ENCODE measurements at regions of chr4 and their contacts with region 1.

Region 1: GRCh38 chr4:2934813-2935761 is 28.1 kb downstream of the NOP14 start:
- DNase-seq: peak; percentile 90 to 93 (median 92)
- H3K4me3 ChIP-seq: peak overlapping the region; percentile 72 to 93 (median 92)
- H3K4me3 Mint-ChIP-seq: peak overlapping the region; percentile 76 to 86
- H3K27ac ChIP-seq: peak overlapping the region; percentile 54 to 90
- H3K27ac Mint-ChIP-seq: peak overlapping the region; percentile 62 to 87 (median 81)
- H3K4me1 ChIP-seq: peaks cover 46% of the 10 kb centered on the region in 2 donors
- H3K4me1 Mint-ChIP-seq: peaks cover 44% of the 10 kb centered on the region
- H3K27me3 ChIP-seq: no peaks in the 10 kb centered on the region
- H3K27me3 Mint-ChIP-seq: no peaks in the 10 kb centered on the region
- CTCF ChIP-seq: no peak

Region 2: GRCh38 chr4:2755837-2756694 is 179.0 kb before region 1 on chr4 and contains the start of gene TNIP2:
- intact Hi-C with region 1: loop called (anchors 5 kb)
- DNase-seq: peak; percentile 69 to 82 (median 73)
- H3K4me3 ChIP-seq: peak within 1 kb of the TSS; percentile 67 to 92 (median 83)
- H3K4me3 Mint-ChIP-seq: peak within 1 kb of the TSS; percentile 72 to 82
- H3K27ac ChIP-seq: peak within 1 kb of the TSS; percentile 23 to 80
- H3K27ac Mint-ChIP-seq: peak within 1 kb of the TSS; percentile 30 to 88 (median 66)
- H3K4me1 ChIP-seq: peaks cover 15 to 19% of the 10 kb centered on the region in 2 donors
- H3K4me1 Mint-ChIP-seq: peaks cover 35% of the 10 kb centered on the region
- H3K27me3 ChIP-seq: no peaks in the 10 kb centered on the region
- H3K27me3 Mint-ChIP-seq: peaks cover 0 to 10% (median 3%) of the 10 kb centered on the region in 3 donors
- CTCF ChIP-seq: peak; percentile 34
- polyA plus RNA-seq, gene TNIP2: 27.6 to 75.7 (median 28.2) TPM

Region 3: GRCh38 chr4:2843263-2843940 is 91.7 kb before region 1 on chr4 and contains the start of gene ADD1:
- intact Hi-C with region 1: loop called (anchors 10 kb)
- DNase-seq: peak; percentile 85 to 93 (median 90)
- H3K4me3 ChIP-seq: peak within 1 kb of the TSS; percentile 76 to 95 (median 88)
- H3K4me3 Mint-ChIP-seq: peak within 1 kb of the TSS; percentile 89 to 98
- H3K27ac ChIP-seq: peak within 1 kb of the TSS; percentile 76 to 80
- H3K27ac Mint-ChIP-seq: peak within 1 kb of the TSS; percentile 81 to 91 (median 89)
- H3K4me1 ChIP-seq: peaks cover 41 to 52% of the 10 kb centered on the region in 2 donors
- H3K4me1 Mint-ChIP-seq: peaks cover 56% of the 10 kb centered on the region
- H3K27me3 ChIP-seq: no peaks in the 10 kb centered on the region
- H3K27me3 Mint-ChIP-seq: peaks cover 0 to 2% (median 0%) of the 10 kb centered on the region in 3 donors
- CTCF ChIP-seq: no peak
- polyA plus RNA-seq, gene ADD1: 76.1 to 122 (median 103) TPM